Activated CD4-positive, alpha-beta T cell treated with anti-CD3 and anti-CD28 coated beads, Interleukin-2, amount 10 ng/mL, durations not matched to agents 7 days and 5 days (primary cell): ENCODE measurements at regions of chr12 and their contacts with region 1.

Region 1: DNA sequence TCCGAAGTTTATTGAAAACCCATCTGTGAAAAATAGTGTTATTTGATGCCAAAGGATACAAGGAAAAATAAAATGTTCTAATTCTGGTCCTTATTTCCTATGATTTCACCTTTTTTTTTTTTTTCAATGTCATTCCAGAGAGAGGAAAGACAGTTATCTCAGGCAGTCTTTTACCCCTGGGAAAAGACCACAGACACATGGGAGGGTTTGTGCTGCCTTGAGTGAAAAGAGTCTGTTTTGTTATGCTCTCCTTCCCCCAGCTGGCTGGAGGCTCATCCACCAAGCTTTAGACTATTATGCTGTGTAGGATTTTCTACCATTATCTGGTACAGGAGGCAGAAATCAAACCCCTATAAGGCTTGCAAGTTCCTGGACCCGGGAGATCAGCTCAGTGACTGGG is 151.8 kb downstream of the CRADD start:
- DNase-seq: no peak
- H3K4me3 Mint-ChIP-seq: no peak overlapping the region
- H3K27ac Mint-ChIP-seq: no peak overlapping the region
- H3K4me1 Mint-ChIP-seq: no peaks in the 10 kb centered on the region
- H3K27me3 Mint-ChIP-seq: no peaks in the 10 kb centered on the region

Region 2: DNA sequence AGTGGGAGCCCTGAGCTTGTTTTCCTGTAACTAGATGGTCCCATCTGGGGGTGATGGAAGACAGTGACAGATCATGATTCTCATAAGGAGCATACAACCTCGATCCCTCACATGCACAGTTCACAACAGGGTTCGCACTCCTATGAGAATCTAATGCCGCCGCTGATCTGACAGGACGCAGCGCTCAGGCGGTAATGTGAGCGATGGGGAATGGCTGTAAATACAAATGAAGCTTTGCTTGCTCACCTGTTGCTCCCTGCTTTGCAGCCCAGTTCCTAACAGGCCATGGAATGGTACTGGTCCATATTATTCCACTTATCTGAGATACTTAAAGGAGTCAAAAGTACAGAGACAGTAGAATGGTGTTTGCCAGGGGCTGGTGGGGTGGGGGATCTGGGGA is 640.5 kb after region 1 on chr12:
- CTCF ChIA-PET with region 1: no interaction called
- POLR2A ChIA-PET with region 1: interaction called, 10 read pairs
- DNase-seq: no peak
- H3K4me3 Mint-ChIP-seq: no peak overlapping the region
- H3K27ac Mint-ChIP-seq: no peak overlapping the region
- H3K4me1 Mint-ChIP-seq: no peaks in the 10 kb centered on the region
- H3K27me3 Mint-ChIP-seq: peaks cover 4% of the 10 kb centered on the region